Ascending aorta (tissue), 2 donors: ENCODE measurements at regions of chr17 and their contacts with region 1.

Region 1: DNA sequence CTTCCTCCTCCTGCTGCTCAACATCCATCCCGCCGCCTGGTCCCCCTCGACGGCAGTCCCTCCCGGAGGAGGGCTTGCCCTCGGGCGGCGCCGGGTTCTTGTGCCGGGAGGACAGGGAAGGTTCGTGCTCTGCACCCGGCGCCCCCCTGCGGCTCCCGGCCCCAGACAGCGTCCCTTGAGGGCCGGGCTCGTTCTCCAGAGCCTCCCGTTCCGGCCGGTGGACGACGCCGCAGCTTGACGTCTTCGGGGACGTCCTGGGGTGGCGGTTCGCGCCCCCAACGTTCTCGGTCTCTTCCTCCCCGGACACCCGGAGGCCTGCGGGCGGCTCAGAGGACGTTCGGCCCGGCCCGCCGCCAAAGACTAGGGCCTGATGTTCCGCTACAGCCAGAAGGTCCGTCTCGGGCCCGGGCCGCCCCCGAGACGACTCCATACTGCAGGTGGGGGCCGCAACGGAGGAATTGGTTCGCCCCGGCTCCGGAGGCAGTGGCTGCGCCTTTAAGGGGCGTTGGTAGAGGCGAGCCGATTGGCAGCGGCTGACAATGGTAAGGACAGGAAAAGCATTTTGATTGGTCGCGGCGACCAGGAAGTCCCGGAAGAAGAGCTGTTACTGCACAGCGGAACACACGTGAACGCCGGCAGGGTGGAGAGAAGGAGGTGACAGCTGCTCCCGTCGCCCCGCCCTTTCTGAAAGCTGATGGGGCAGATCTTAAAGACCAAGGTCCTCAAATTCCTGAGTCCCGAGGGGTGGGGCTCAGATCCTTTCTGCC is at the start of gene BORCS6:
- DNase-seq: peak; percentile 97 to 99
- H3K4me3 ChIP-seq: peak within 1 kb of the TSS; percentile 69 to 81
- H3K27ac ChIP-seq: peak within 1 kb of the TSS; percentile 96 to 97
- H3K4me1 ChIP-seq: peaks cover 14 to 28% of the 10 kb centered on the region in 2 donors
- H3K27me3 ChIP-seq: no peaks in the 10 kb centered on the region
- CTCF ChIP-seq: peak in 1 of 3 experiments; percentile 6
- total RNA-seq, gene BORCS6: 29.5 TPM

Region 2: GRCh38 chr17:7173687-7174602 is 1015.9 kb before region 1 on chr17:
- intact Hi-C with region 1: no loop called
- DNase-seq: no peak
- H3K4me3 ChIP-seq: no peak overlapping the region
- H3K27ac ChIP-seq: no peak overlapping the region
- H3K4me1 ChIP-seq: peaks cover 4 to 13% of the 10 kb centered on the region in 2 donors
- H3K27me3 ChIP-seq: no peaks in the 10 kb centered on the region
- CTCF ChIP-seq: no peak

Region 3: GRCh38 chr17:8138672-8139371 is 51.1 kb before region 1 on chr17:
- intact Hi-C with region 1: loop called (anchors 1 kb)
- DNase-seq: peak; percentile 86 to 98
- H3K4me3 ChIP-seq: peak overlapping the region; percentile 11 to 36
- H3K27ac ChIP-seq: peak overlapping the region; percentile 77
- H3K4me1 ChIP-seq: peaks cover 4 to 16% of the 10 kb centered on the region in 2 donors
- H3K27me3 ChIP-seq: no peaks in the 10 kb centered on the region
- CTCF ChIP-seq: peak; percentile 82 to 91 (median 87)

Region 4: GRCh38 chr17:8156246-8156992 is 33.5 kb before region 1 on chr17:
- intact Hi-C with region 1: loop called (anchors 1 kb)
- DNase-seq: peak; percentile 100
- H3K4me3 ChIP-seq: peak overlapping the region; percentile 77 to 90
- H3K27ac ChIP-seq: peak overlapping the region; percentile 99 to 100
- H3K4me1 ChIP-seq: peaks cover 13 to 46% of the 10 kb centered on the region in 2 donors
- H3K27me3 ChIP-seq: no peaks in the 10 kb centered on the region
- CTCF ChIP-seq: peak in 1 of 3 experiments; percentile 22

Region 5: DNA sequence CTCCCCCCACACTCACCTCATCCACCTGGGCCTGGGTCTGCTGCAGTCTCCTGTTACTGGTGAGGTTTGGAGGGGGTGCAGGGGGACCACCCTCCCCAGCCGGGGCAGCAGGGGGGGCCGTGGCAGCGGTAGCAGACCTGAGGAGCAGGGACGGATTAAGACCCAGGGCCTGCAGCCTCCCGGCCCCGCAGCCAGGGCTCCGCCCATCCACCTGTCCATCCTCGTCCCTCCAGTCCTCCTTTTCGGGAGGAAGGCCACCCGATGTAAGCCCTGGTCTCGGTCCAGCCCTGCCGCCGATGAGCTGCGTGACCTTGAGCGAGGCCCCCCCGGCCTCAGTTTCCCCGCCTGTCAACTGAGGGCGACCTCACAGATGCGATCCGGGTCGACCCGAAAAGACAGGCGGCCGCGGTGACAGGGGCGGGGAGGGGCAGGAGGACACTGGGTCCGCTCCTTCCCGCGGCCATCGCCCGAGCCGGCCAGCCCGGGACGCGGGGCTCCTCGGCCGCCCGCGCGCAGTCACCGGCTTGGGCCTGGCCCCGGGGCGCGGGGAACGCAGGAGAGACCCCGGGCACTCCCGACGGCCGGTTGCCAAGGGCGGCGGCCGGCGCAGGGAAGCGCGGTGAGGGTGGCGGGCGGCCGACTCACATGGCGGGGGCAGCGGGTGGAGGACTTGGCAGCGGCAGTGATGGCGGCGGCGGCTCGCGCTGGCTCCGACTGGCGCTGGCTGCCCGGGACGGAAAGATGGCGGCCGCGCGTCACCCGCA is 27.5 kb before region 1 on chr17 and contains the start of gene VAMP2:
- intact Hi-C with region 1: loop called (anchors 2 kb)
- DNase-seq: peak in 1 of 2 donors; percentile 92
- H3K4me3 ChIP-seq: peak within 1 kb of the TSS; percentile 91 to 100
- H3K27ac ChIP-seq: peak within 1 kb of the TSS; percentile 99 to 100
- H3K4me1 ChIP-seq: peaks cover 21 to 42% of the 10 kb centered on the region in 2 donors
- H3K27me3 ChIP-seq: no peaks in the 10 kb centered on the region
- CTCF ChIP-seq: no peak
- total RNA-seq, gene VAMP2: 28.3 TPM

Region 6: GRCh38 chr17:8209909-8210760 is 20.2 kb after region 1 on chr17 and contains the start of gene AURKB:
- intact Hi-C with region 1: loop called (anchors 1 kb)
- DNase-seq: peak; percentile 82 to 97
- H3K4me3 ChIP-seq: peak within 1 kb of the TSS; percentile 63 to 74
- H3K27ac ChIP-seq: peak within 1 kb of the TSS; percentile 78 to 80
- H3K4me1 ChIP-seq: peaks cover 0 to 15% of the 10 kb centered on the region in 2 donors
- H3K27me3 ChIP-seq: no peaks in the 10 kb centered on the region
- CTCF ChIP-seq: no peak
- total RNA-seq, gene AURKB: not detected

Region 7: GRCh38 chr17:8237175-8237574 is 47.3 kb after region 1 on chr17:
- intact Hi-C with region 1: no loop called
- DNase-seq: no peak
- H3K4me3 ChIP-seq: no peak overlapping the region
- H3K27ac ChIP-seq: no peak overlapping the region
- H3K4me1 ChIP-seq: no peaks in the 10 kb centered on the region
- H3K27me3 ChIP-seq: no peaks in the 10 kb centered on the region
- CTCF ChIP-seq: no peak

Region 8: DNA sequence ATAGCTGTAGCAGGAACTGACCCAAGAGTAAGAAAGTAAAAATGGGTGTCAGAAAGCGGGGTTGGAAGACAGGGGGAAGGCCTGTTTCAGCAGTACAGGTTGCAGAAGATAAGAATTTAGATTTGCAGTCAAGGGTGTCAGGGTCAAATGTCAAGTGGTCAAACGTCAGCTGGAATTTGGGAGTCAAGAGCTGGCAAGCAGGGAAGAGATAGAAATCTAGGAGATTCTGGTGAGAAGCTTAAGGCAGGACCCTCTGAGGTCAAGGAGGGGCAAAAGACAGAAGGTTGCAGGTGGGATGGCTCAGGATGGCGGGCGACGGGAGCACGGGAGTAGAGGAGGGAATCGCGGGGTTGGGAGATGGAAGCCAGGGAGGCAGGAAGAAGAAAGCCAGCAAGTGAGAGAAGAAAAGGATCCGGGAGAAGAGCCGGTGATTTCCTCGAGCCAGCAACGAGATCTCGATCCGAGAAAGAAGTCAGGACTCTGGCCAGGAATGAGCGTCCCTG is 105.0 kb after region 1 on chr17:
- intact Hi-C with region 1: loop called (anchors 5 kb)
- DNase-seq: no peak
- H3K4me3 ChIP-seq: peak overlapping the region; percentile 73 to 74
- H3K27ac ChIP-seq: peak overlapping the region; percentile 82 to 83
- H3K4me1 ChIP-seq: peaks cover 0 to 5% of the 10 kb centered on the region in 2 donors
- H3K27me3 ChIP-seq: no peaks in the 10 kb centered on the region
- CTCF ChIP-seq: no peak